ENCODE measurements at regions of chr11 and their contacts with region 1.

Region 1: GRCh38 chr11:73242251-73243079 is 24.4 kb downstream of the P2RY2 start:
- DNase-seq: peak; percentile 39
- ATAC-seq: peak; percentile 93
- H3K4me3 ChIP-seq: peak overlapping the region in 1 of 2 experiments; percentile 34; a peak in 2 of 4 replicates
- H3K27ac ChIP-seq: peak overlapping the region; percentile 23; the same call in 1 of the 2 replicates
- H3K4me1 ChIP-seq: peaks cover 7% of the 10 kb centered on the region; the same call in 1 of the 2 replicates
- H3K27me3 ChIP-seq: no peaks in the 10 kb centered on the region
- CTCF ChIP-seq: peak; percentile 98

Region 2: GRCh38 chr11:72831513-72832300 is 410.8 kb before region 1 on chr11:
- CTCF ChIA-PET with region 1: interaction called, 5 read pairs
- POLR2A ChIA-PET with region 1: no interaction called
- in situ Hi-C with region 1: no loop called
- intact Hi-C with region 1: loop called (anchors 5 kb)
- DNase-seq: peak; percentile 42
- ATAC-seq: peak; percentile 96
- H3K4me3 ChIP-seq: no peak overlapping the region
- H3K27ac ChIP-seq: 0 out of 2 replicates have a peak overlapping the region, but pooled peaks have one; percentile 13
- H3K4me1 ChIP-seq: 0 out of 2 replicates have a peak, but pooled peaks cover 4% of the 10 kb centered on the region
- H3K27me3 ChIP-seq: no peaks in the 10 kb centered on the region
- CTCF ChIP-seq: peak; percentile 98

Region 3: DNA sequence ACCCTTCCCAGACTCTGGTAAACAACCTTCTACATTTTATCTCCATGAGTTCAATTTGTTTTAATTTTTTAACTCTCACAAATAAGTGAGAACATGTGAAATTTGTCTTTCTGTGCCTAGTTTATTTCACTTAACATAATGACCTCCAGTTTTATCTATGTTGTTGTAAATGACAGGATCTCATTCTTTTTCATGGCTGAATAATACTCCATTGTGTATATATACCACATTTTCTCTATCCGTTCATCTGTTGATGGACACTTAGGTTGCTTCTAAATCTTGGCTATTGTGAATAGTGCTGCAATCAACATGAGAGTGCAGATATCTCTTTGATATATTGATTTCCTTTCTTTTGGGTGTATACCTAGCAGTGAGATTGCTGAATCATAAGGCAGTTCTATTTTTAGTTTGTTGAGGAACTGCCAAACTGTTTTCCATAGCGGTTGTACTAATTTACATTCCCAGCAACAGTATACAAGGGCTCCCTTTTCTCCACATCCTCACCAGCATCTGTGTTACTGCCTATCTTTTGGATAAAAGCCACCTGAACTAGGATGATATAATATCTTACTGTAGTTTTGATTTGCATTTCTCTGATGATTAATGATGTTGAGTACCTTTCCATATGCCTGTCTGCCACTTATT is 334.3 kb before region 1 on chr11:
- CTCF ChIA-PET with region 1: no interaction called
- POLR2A ChIA-PET with region 1: interaction called, 11 read pairs
- in situ Hi-C with region 1: no loop called
- intact Hi-C with region 1: no loop called
- DNase-seq: no peak
- ATAC-seq: no peak
- H3K4me3 ChIP-seq: no peak overlapping the region
- H3K27ac ChIP-seq: no peak overlapping the region
- H3K4me1 ChIP-seq: no peaks in the 10 kb centered on the region
- H3K27me3 ChIP-seq: no peaks in the 10 kb centered on the region
- CTCF ChIP-seq: no peak

Region 4: GRCh38 chr11:73184953-73185671 is 57.4 kb before region 1 on chr11:
- CTCF ChIA-PET with region 1: interaction called, 8 read pairs
- POLR2A ChIA-PET with region 1: no interaction called
- in situ Hi-C with region 1: no loop called
- intact Hi-C with region 1: loop called (anchors 2 kb)
- DNase-seq: peak; percentile 56
- ATAC-seq: peak; percentile 93
- H3K4me3 ChIP-seq: peak overlapping the region in 1 of 2 experiments; percentile 32; a peak in 3 of 4 replicates
- H3K27ac ChIP-seq: no peak overlapping the region
- H3K4me1 ChIP-seq: peaks cover 5% of the 10 kb centered on the region; the same call in 1 of the 2 replicates
- H3K27me3 ChIP-seq: 0 out of 2 replicates have a peak, but pooled peaks cover 3% of the 10 kb centered on the region
- CTCF ChIP-seq: peak; percentile 98

Region 5: DNA sequence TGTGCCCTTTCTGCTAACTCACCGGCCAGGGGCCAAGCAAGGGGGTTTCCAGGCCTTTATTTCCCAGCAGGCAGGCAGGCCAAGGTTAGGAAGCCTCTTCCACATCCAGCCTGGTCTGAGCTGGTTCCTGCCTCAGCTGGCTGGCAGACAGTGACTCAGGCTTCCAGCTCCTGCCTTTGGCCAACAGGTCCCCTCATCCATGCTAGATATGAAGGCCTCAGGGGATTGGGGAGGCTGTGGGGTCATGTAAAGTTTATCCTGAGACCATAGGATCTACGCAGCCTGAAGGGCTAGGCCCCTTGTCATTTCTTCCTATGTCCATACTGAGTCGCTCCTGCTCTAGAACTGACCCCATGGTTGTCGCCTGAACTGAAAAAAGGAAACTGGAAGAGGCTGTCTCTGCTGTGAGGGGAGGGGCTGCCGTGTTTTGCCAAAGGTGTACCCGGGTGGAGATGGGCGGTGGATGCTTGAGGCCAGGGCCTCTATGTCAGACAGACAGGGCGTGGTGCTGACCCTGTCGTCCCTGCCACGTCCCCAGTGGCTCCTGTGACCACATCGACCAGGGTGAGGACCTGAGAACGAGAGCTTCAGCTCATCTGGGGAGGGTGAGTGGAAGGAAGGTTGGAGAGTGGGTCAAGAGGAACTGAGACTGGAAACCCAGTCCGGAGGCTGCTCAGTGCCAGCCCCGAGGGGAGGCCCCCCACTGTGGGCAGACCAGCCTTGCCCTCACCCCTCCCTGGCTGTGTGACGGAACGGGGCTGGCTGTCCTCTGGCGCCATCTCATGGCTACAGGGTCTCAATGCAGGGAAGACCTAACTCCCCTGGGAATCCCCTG is 46.6 kb after region 1 on chr11:
- CTCF ChIA-PET with region 1: interaction called, 10 read pairs
- POLR2A ChIA-PET with region 1: no interaction called
- in situ Hi-C with region 1: no loop called
- intact Hi-C with region 1: no loop called
- DNase-seq: peak; percentile 56
- ATAC-seq: peak; percentile 85
- H3K4me3 ChIP-seq: peak overlapping the region; percentile 15 to 44
- H3K27ac ChIP-seq: peak overlapping the region; percentile 61
- H3K4me1 ChIP-seq: peaks cover 12% of the 10 kb centered on the region
- H3K27me3 ChIP-seq: no peaks in the 10 kb centered on the region
- CTCF ChIP-seq: peak; percentile 100

Region 6: GRCh38 chr11:73760679-73761402 is 518.4 kb after region 1 on chr11 and contains the start of gene RAB6A:
- CTCF ChIA-PET with region 1: no interaction called
- POLR2A ChIA-PET with region 1: no interaction called
- in situ Hi-C with region 1: no loop called
- intact Hi-C with region 1: no loop called
- DNase-seq: peak; percentile 95
- ATAC-seq: peak; percentile 95
- H3K4me3 ChIP-seq: peak within 1 kb of the TSS; percentile 58 to 85
- H3K27ac ChIP-seq: peak within 1 kb of the TSS; percentile 89
- H3K4me1 ChIP-seq: peaks cover 19% of the 10 kb centered on the region; the same call in 1 of the 2 replicates
- H3K27me3 ChIP-seq: no peaks in the 10 kb centered on the region; the same call in 1 of the 2 replicates
- CTCF ChIP-seq: no peak
- total RNA-seq, gene RAB6A: 149 TPM

Measured in Panc1 (cell line).